Activated T-helper 2 cell treated with anti-CD3 and anti-CD28 coated beads, Interferon-gamma antibody, Interleukin-2, Interleukin-4, amounts not matched to agents 10 μg/mL and 5 μg/mL and 100 μg/mL, durations not matched to agents 14 hours and 24 hours and 36 hours (primary cell): ENCODE measurements at regions of chr19 and their contacts with region 1.

Region 1: DNA sequence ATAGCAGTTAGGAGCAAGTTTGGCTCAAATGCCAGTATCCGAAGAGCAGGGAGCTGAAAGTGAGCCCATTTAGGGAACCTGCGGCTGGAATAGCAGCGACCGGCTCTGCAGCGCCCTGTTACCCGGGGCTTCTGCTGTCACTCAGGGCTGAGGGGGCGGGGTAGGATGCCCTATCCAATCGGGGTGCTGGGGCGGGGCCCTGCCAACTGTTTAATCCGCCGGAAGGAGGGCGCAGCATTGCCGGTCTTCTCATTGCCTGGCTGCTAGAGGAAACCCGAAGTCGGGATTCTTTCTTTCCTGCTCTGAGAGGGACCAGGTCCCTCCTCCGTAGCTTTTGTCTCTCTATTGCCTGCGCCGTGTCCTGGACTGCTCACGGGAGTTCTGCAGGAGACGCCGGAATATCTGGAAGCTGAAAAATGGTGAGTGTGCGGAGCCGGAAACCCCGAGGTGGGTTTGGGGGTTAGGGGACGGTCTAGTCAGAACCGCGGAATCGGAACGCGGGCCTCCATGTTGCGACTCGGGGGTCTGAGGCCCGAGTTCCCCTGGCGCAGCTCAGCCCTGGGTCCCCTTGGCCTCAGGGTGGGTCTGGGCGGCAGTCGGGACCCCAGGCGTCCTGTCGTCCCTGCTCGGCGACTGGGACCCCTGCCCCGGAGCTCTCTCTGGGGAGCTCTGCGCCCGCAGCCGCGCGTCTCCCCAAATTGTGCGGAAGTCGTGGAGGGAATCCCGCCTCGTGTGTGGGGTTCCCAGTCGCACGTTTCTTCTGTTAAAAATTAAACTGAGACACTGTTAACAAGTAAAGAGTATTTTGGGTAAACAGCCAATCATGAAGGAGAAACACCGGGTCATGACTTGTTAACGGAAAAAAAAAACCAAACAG is 22.8 kb downstream of the ZNF763 start:
- DNase-seq: peak; percentile 87
- H3K4me3 Mint-ChIP-seq: peak overlapping the region; percentile 98
- H3K27ac Mint-ChIP-seq: peak overlapping the region; percentile 97
- H3K4me1 Mint-ChIP-seq: peaks cover 15% of the 10 kb centered on the region
- H3K27me3 Mint-ChIP-seq: no peaks in the 10 kb centered on the region

Region 2: DNA sequence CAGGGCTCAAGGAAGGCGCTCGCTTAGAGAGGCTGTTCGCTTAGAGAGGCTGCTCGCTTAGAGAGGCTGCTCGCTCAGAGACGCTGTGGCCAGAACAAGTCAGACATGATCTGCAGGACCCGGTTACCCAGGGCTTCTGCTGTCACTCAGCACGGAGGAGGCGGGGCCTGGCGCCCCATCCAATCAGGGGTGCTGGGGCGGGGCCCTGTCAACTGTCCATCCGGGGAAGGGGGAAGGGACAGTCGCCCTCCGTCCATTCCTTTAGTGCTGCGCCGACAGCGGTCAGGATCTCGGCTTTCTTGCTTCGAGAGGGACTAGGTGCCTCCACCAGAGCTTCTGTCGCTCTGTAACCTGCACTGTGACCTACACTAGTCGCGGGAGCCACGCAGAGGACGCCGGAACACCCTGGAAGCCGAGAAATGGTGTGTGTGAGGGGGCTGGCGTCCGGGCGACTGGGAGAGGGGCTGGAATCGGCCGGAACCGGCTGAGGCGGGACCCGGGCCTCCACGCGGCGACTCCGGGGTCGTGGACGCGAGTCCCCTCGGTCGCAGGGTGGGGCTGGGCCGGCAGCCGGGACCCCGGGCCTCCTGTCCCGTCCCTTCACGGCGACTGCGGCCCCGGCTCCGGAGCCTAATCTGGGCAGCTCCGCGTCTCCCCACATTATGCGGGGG is 173.5 kb before region 1 on chr19 and contains the start of gene ZNF440:
- intact Hi-C with region 1: loop called (anchors 5 kb)
- DNase-seq: peak; percentile 85
- H3K4me3 Mint-ChIP-seq: peak within 1 kb of the TSS; percentile 88
- H3K27ac Mint-ChIP-seq: peak within 1 kb of the TSS; percentile 71
- H3K4me1 Mint-ChIP-seq: peaks cover 14% of the 10 kb centered on the region
- H3K27me3 Mint-ChIP-seq: no peaks in the 10 kb centered on the region
- total RNA-seq, gene ZNF440: 10.8 and 11.0 TPM in 2 replicates

Region 3: DNA sequence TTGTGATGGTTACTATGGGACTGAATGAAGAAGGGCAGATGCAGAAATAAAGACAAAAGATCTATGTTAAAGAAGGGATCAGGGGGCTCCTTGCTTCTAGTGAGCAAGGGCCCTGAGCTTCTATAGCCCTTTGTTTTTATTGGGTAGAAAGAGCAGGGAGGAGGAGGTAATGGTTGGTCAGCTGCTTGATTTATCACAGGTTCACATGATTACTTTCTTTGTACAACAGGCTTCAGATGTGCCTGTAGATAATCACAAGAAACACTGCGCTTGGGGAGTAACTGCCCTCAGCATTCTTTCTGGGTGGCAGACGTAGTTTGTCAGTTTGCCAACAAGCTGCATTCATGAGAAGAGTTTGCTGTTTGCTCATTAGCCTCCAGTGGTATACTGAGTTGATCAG is 143.9 kb before region 1 on chr19:
- intact Hi-C with region 1: no loop called
- DNase-seq: no peak
- H3K4me3 Mint-ChIP-seq: no peak overlapping the region
- H3K27ac Mint-ChIP-seq: no peak overlapping the region
- H3K4me1 Mint-ChIP-seq: peaks cover 3% of the 10 kb centered on the region
- H3K27me3 Mint-ChIP-seq: no peaks in the 10 kb centered on the region

Region 4: DNA sequence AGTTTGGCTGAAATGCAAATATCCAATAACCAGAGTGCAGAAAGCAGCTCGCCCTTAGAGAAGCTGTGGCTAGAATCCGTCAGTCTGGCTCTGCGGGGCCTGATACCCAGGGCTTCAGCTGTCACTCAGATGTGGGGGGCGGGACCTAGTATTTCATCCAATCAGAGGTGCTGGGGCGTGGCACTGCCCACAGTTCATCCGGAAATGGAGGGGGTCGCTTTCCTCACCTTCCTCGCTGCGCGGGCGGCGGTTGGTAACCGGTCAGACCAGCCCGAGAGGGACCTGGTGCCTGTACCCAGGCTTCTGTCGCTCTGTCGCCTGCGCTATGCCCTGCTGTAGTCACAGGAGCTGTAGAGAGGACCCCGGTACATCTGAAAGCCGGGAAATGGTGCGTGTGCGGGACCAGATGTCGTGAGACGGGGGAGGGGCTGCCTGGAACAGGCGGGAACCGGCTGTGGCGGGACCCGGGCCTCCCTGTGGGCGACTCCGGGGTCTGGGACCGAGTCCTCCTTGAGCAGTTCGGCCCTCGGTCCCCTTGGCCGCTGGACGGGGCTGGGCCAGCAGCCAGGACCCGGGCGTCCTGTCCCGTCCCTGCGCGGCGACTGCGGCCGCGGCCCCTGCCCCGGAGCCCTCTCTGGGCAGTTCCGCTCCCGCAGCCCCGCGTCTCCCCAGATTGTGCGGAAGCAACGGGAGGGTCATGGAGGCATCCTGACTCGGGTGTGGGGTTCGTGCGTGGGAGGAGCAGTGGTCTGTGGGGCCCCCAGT is 62.6 kb before region 1 on chr19 and contains the start of gene ZNF700:
- intact Hi-C with region 1: loop called (anchors 1 kb)
- DNase-seq: peak; percentile 91
- H3K4me3 Mint-ChIP-seq: peak within 1 kb of the TSS; percentile 95
- H3K27ac Mint-ChIP-seq: peak within 1 kb of the TSS; percentile 98
- H3K4me1 Mint-ChIP-seq: peaks cover 23% of the 10 kb centered on the region
- H3K27me3 Mint-ChIP-seq: peaks cover 2% of the 10 kb centered on the region
- total RNA-seq, gene ZNF700: 14.5 and 14.6 TPM in 2 replicates

Region 5: GRCh38 chr19:12052497-12053169 is 65.0 kb after region 1 on chr19 and contains the start of gene ZNF878:
- intact Hi-C with region 1: loop called (anchors 5 kb)
- DNase-seq: peak; percentile 42
- H3K4me3 Mint-ChIP-seq: peak within 1 kb of the TSS; percentile 83
- H3K27ac Mint-ChIP-seq: peak within 1 kb of the TSS; percentile 46
- H3K4me1 Mint-ChIP-seq: peaks cover 9% of the 10 kb centered on the region
- H3K27me3 Mint-ChIP-seq: peaks cover 7% of the 10 kb centered on the region
- total RNA-seq, gene ZNF878: 0.98 and 1.3 TPM in 2 replicates

Region 6: DNA sequence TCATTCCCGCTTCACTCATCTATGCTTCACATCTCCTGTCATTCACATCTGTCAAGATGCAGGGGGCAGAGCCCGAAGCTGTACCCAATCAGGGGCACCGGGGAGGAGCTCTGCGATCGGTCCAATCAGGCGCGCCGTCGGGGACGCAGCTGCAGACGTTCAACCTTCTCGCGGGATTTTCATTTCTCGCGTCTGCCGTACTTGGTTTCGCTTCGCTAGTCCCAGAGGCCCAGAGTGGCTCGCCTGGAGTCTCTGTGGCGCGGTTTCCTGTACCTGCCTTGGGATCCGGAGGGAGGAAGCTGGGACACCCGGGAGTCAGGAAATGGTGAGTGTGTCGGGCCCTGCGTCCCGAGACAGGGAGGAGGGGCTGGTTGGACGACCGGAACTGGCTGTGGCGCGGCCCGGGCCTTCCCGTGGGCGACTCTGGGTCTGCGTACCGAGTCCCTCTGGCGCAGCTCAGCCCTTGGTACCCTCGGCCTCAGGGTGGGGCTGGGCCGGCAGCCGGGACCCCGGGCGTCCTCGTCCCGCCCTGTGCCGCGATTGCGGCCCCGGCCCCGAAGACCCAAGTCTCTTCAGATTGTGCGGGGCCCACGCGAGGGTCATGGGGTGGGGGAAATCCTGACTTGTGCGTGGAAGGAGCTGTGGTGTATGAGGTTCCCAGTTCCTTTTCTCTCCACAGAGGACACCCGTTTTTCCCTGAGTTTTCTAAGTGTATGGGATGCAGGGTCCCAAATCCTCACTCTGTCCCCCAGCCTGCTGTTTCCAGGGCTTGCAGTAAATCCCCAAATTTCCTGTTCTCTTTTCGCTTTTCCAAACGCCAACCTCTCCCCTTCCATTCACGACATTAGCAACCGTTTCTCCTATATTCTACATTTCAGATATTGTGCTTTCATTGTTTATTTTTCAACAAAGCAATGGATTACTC is 175.5 kb after region 1 on chr19 and contains the start of gene ZNF136:
- intact Hi-C with region 1: loop called (anchors 2 kb)
- DNase-seq: peak; percentile 93
- H3K4me3 Mint-ChIP-seq: peak within 1 kb of the TSS; percentile 100
- H3K27ac Mint-ChIP-seq: peak within 1 kb of the TSS; percentile 94
- H3K4me1 Mint-ChIP-seq: peaks cover 24% of the 10 kb centered on the region
- H3K27me3 Mint-ChIP-seq: no peaks in the 10 kb centered on the region
- total RNA-seq, gene ZNF136: 7.7 and 9.7 TPM in 2 replicates

Region 7: GRCh38 chr19:12365236-12366162 is 377.9 kb after region 1 on chr19 and contains the start of gene ZNF442:
- intact Hi-C with region 1: no loop called
- DNase-seq: peak; percentile 64
- H3K4me3 Mint-ChIP-seq: peak within 1 kb of the TSS; percentile 86
- H3K27ac Mint-ChIP-seq: no peak within 1 kb of the TSS
- H3K4me1 Mint-ChIP-seq: peaks cover 7% of the 10 kb centered on the region
- H3K27me3 Mint-ChIP-seq: peaks cover 1% of the 10 kb centered on the region
- total RNA-seq, gene ZNF442: 0.55 and 1.2 TPM in 2 replicates